Naive thymus-derived CD8-positive, alpha-beta T cell (primary cell): ENCODE measurements at regions of chr10 and their contacts with region 1.

Region 1: DNA sequence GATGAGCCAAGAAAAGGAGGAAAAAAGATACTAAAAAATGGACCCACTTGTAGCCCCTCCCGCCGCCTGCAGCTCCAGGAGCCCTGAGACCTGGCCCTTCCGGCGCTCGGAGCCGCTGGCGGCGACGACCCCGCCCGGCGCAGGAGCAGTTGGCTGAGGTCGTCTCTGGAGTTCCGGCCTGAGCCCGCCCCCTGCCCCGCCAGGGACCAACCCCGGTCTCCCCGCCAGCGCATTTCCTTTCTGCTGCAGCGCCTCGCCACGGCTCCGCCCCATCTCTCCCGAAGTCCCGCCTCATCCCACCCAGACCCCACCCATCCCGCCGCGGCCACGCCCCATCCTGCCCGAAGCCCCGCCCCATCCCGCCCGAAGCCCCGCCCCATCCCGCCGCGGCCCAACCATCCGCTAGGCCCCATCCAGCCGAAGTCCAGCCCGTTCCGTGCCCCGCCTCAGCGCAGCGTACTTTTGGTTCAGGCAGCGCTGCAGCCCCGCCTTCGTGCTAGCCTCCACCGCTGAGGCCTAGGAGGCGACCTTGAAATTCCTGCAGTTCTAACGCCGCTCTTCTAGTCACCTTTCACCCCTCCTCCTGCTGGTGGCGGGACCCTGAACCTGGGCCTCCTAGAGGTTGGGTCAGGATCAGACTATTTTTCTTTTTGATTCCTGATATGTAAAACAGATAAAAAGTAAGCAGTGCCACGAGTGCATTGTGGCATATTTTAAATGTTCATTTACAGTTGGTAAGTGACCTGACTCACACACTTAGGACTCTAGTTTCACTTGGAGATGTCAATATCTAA is at the start of gene STN1:
- DNase-seq: peak; percentile 90 to 97 (median 94)
- ATAC-seq: peak; percentile 90 to 94
- H3K4me3 Mint-ChIP-seq: peak within 1 kb of the TSS; percentile 89 to 99 (median 97)
- H3K27ac Mint-ChIP-seq: peak within 1 kb of the TSS; percentile 93 to 99 (median 97)
- H3K4me1 Mint-ChIP-seq: peaks cover 12 to 54% (median 34%) of the 10 kb centered on the region in 4 donors
- H3K27me3 Mint-ChIP-seq: no peaks in the 10 kb centered on the region
- polyA plus RNA-seq, gene STN1: 89.3 to 103 (median 94.8) TPM

Region 2: GRCh38 chr10:103845972-103846371 is 72.3 kb before region 1 on chr10:
- POLR2A ChIA-PET with region 1: no interaction called
- DNase-seq: peak in 4 of 10 donors; percentile 23 to 34 (median 31)
- ATAC-seq: peak; percentile 86 to 91
- H3K4me3 Mint-ChIP-seq: peak overlapping the region; percentile 17 to 74 (median 42)
- H3K27ac Mint-ChIP-seq: peak overlapping the region in 9 of 10 donors; percentile 8 to 70 (median 52)
- H3K4me1 Mint-ChIP-seq: peaks cover 11 to 26% (median 20%) of the 10 kb centered on the region in 4 donors
- H3K27me3 Mint-ChIP-seq: peaks cover 3 to 27% (median 5%) of the 10 kb centered on the region in 5 donors

Region 3: DNA sequence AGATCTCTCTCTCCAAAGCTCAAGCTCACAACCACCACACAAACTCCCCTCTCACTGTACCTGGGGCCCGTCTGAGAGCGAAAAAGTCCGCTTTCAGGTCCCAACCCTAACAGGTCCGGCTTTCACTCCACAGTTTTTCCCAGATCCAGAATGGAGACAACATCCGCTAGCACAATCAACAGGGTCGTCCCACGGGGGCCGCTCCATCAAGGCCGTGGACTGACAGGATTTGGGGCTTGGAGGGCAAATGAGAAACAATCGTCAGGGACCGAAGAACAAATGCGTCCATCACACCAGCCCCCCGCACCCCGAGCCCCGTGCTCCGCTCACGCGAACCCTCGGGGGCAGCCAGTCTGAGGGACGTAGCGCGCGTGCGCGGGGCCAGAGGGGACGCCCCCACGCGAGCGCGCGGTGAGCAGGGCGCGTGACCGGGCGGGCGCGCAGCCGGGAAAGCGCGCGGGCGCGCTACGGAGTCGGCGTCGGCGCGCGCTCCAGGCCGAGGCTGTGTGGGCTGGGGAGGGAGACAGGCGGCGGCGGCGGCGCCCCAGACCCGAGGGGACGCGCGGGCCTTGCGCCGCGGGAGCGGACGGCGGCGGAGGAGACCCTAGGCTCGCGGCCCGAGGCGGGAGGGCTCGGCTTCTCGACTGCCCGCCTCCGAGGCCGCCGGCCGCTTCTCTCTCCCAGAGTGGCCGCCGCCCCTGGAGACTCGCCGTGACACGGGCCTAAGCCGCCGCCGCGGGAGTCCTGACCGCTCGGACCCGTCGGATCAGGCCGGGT is 48.6 kb after region 1 on chr10 and contains the start of gene SLK:
- POLR2A ChIA-PET with region 1: interaction called, 21 read pairs
- DNase-seq: peak; percentile 77 to 92 (median 86)
- ATAC-seq: peak; percentile 80 to 82
- H3K4me3 Mint-ChIP-seq: peak within 1 kb of the TSS; percentile 84 to 100 (median 98)
- H3K27ac Mint-ChIP-seq: peak within 1 kb of the TSS; percentile 94 to 98 (median 96)
- H3K4me1 Mint-ChIP-seq: peaks cover 13 to 46% (median 43%) of the 10 kb centered on the region in 4 donors
- H3K27me3 Mint-ChIP-seq: no peaks in the 10 kb centered on the region
- polyA plus RNA-seq, gene SLK: 5.0 to 12.7 (median 7.0) TPM